ENCODE measurements at regions of chr5 and their contacts with region 1.

Region 1: DNA sequence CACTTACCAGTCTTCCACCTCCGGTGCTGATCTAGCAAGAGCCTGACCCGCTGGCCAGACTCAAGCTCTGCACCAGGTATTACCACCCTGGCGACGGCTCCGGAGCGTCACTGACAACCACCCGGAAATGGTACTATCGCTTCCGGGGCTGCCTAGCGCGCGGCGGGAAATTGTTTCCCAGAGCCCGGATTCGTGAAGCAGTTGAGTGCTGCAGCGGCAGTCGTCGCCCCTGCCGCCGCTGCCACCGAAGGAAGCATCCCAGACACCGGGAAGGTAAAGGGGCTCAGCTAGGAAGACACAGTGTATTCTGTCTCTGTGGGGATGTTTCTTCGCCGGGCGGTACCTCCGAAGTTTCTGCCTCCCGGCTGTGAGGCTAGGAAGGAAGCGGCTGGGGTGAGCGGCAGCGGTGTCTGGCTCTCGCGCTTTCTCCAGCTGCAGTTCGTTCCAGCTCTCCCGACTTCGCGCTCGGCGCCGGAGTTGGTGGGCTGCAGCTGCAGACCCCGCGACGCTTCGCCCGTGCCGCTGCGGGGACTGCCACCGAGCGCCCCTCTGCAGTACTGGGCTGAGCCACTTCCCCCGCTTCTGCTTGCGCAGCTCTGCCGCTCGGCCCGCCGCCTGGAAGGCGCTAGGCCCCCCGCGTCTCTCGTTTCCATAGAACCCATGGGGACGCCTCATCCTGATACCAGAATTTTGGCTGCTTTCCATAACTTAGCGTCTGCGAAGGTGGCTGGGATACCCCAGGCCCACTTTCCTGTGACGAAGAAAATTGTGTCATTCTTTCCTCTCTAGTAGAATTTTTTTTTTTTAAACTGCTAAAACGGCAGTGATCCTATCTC is at the starts of genes KIAA0825 and SLF1:
- DNase-seq: peak; percentile 94
- ATAC-seq: peak; percentile 90
- H3K4me3 Mint-ChIP-seq: peak within 1 kb of the TSS; percentile 84
- H3K27ac Mint-ChIP-seq: peak within 1 kb of the TSS; percentile 95
- H3K4me1 Mint-ChIP-seq: peaks cover 36% of the 10 kb centered on the region
- H3K27me3 Mint-ChIP-seq: no peaks in the 10 kb centered on the region
- total RNA-seq, gene KIAA0825: 1.1 to 1.3 TPM
- total RNA-seq, gene SLF1: 13.3 to 13.6 TPM

Region 2: DNA sequence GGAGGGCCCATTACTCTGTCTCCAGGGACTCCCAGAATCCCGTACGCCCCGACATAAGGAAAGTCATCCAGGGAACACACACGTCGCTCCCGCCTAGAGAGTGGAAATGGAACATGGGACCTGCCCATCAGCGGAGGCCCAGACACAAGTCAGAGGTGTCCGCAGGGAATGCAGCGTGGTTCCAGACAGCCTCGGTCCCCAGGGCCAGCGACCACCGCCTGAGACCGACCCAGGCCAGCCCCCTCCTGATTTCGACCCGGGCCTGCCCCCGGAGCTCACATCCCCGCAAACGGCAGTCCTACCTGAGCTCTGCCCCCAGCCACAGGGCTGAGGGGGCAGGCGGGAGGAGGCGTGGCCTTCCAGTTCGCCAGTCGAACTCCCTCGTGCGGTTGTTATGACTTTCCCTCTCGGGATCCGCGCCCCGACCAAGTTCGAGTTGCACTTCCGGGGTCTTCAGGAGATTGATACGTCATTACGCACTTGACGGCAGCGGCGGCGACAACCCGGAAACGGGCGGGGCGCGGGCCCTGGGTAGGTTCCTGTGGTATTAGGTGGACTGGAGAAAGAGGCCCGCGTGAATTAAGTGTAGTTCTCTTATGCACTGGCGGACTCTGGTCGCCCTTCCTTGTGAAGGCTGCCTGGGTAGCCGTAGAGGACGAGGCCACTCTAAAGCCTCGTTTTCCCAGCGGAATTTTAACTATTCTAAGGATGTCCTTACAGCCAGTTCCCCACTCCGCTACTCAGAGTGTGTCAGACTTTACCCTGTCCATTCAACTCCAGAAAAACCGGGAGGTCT is 507.3 kb before region 1 on chr5:
- CTCF ChIA-PET with region 1: no interaction called
- POLR2A ChIA-PET with region 1: no interaction called
- intact Hi-C with region 1: loop called (anchors 1 to 5 kb)
- DNase-seq: peak; percentile 96
- ATAC-seq: peak; percentile 97
- H3K4me3 Mint-ChIP-seq: peak overlapping the region; percentile 91
- H3K27ac Mint-ChIP-seq: peak overlapping the region; percentile 93
- H3K4me1 Mint-ChIP-seq: peaks cover 39% of the 10 kb centered on the region
- H3K27me3 Mint-ChIP-seq: no peaks in the 10 kb centered on the region

Region 3: GRCh38 chr5:94693043-94693822 is 74.5 kb after region 1 on chr5:
- CTCF ChIA-PET with region 1: interaction called, 3 read pairs
- POLR2A ChIA-PET with region 1: no interaction called
- intact Hi-C with region 1: loop called in 1 of 2 experiments (anchors 5 kb)
- DNase-seq: no peak
- ATAC-seq: no peak
- H3K4me3 Mint-ChIP-seq: no peak overlapping the region
- H3K27ac Mint-ChIP-seq: no peak overlapping the region
- H3K4me1 Mint-ChIP-seq: no peaks in the 10 kb centered on the region
- H3K27me3 Mint-ChIP-seq: no peaks in the 10 kb centered on the region

Region 4: GRCh38 chr5:94793113-94793815 is 174.6 kb after region 1 on chr5:
- CTCF ChIA-PET with region 1: no interaction called
- POLR2A ChIA-PET with region 1: no interaction called
- intact Hi-C with region 1: loop called (anchors 1 kb)
- DNase-seq: peak; percentile 33
- ATAC-seq: peak; percentile 97
- H3K4me3 Mint-ChIP-seq: peak overlapping the region; percentile 58
- H3K27ac Mint-ChIP-seq: peak overlapping the region; percentile 93
- H3K4me1 Mint-ChIP-seq: peaks cover 44% of the 10 kb centered on the region
- H3K27me3 Mint-ChIP-seq: no peaks in the 10 kb centered on the region

Region 5: DNA sequence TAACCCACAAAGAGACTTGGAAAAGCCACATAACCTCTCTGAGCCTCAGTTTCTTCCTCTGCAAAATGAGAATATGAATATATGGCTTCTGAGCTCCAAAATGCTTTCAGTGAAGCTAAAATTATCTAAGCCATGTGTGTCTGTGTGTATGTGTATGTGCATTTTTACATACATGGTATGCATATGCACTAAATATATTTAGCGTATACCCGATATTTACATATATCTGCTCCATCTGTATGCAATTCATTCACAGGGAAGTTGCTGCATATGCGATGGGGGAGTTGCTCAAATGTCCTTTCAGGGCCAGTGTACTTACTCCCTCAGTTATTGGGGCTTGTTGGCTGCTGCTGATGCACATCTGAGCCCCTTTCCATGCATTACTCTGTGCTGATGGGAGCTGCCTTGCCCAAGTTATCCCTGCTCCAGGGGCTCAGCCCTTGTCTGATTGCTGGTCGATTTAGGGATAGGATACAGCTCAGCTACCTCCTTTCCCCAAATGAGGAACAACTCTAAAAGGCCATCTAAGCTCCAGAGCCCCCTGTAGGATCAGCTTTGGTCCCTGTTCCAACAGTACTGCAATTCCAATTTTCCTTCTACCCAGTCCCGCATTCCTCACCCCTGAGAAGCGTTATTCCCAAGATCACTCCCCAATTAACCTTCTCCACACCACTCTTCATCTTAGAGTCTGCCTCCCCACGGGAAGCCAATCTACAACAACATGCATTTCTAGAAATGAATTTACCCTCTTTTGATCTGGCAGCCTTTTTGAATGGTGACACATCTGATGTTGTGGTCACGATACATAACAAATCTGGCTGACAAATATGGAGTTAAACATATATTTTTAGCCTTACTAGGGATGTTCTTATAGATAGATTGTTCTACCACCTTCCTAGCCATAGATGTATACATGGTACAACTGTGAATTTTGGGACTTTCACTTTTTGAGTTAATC is 1128.3 kb after region 1 on chr5:
- CTCF ChIA-PET with region 1: no interaction called
- POLR2A ChIA-PET with region 1: no interaction called
- intact Hi-C with region 1: loop called in 1 of 2 experiments (anchors 5 kb)
- DNase-seq: peak; percentile 20
- ATAC-seq: peak; percentile 88
- H3K4me3 Mint-ChIP-seq: no peak overlapping the region
- H3K27ac Mint-ChIP-seq: no peak overlapping the region
- H3K4me1 Mint-ChIP-seq: peaks cover 13% of the 10 kb centered on the region
- H3K27me3 Mint-ChIP-seq: no peaks in the 10 kb centered on the region

Measured in activated CD4-positive, alpha-beta T cell treated with anti-CD3 and anti-CD28 coated beads for 36 hours (primary cell).